ENCODE measurements at regions of chr21 and their contacts with region 1.

Region 1: DNA sequence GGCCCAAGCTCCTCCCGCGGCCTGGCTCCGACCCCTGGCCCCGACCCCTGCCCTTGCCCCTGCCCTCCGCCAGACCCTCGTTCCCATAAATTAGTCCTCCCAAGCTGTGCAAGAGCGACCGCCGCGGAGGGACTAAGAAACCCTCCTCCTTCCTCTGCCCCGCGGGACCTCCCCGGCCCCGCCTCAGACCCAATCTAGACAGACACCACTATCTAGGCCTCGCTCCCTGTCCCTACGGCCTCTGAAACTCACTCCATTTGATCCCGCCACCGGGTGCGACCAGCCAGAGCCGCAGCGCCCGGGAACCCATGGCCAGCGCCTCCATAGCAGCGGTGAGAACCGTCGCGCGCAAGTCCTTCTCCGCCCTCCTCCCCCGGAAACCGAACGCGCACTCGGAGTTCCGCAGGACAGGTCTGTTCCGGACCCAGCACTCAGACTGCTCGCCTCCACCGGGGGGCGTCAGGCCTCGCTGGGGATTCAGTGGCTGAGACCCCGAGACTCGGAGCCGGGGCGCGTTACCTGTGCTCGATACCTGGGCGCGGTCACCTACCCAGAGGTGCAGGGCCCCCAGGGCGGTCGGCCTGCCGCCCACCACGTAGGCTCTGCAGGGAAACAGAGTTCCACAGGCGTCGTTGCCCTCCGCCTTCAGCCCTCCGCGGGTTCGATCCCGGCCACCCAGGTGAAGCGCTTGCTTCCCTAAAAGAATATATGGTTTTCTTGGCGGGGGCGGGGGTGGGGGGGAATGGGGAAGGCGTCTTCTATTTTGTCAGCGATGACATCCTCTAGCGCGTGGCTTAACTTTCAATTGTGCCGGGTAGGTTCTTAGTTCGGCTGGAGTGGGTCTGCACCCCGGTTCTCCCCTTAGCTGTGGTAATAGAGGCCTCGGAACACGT is at the start of gene MRPL39:
- DNase-seq: peak; percentile 73 to 91 (median 86)
- ATAC-seq: peak; percentile 84
- H3K4me3 ChIP-seq: peak within 1 kb of the TSS; percentile 83 to 94
- H3K4me3 Mint-ChIP-seq: peak within 1 kb of the TSS; percentile 100
- H3K27ac ChIP-seq: peak within 1 kb of the TSS; percentile 64 to 69
- H3K27ac Mint-ChIP-seq: peak within 1 kb of the TSS; percentile 98
- H3K4me1 ChIP-seq: peaks cover 22% of the 10 kb centered on the region
- H3K4me1 Mint-ChIP-seq: peaks cover 42% of the 10 kb centered on the region
- H3K27me3 ChIP-seq: no peaks in the 10 kb centered on the region
- H3K27me3 Mint-ChIP-seq: no peaks in the 10 kb centered on the region
- CTCF ChIP-seq: no peak
- total RNA-seq, gene MRPL39: 13.8 to 17.4 TPM

Region 2: DNA sequence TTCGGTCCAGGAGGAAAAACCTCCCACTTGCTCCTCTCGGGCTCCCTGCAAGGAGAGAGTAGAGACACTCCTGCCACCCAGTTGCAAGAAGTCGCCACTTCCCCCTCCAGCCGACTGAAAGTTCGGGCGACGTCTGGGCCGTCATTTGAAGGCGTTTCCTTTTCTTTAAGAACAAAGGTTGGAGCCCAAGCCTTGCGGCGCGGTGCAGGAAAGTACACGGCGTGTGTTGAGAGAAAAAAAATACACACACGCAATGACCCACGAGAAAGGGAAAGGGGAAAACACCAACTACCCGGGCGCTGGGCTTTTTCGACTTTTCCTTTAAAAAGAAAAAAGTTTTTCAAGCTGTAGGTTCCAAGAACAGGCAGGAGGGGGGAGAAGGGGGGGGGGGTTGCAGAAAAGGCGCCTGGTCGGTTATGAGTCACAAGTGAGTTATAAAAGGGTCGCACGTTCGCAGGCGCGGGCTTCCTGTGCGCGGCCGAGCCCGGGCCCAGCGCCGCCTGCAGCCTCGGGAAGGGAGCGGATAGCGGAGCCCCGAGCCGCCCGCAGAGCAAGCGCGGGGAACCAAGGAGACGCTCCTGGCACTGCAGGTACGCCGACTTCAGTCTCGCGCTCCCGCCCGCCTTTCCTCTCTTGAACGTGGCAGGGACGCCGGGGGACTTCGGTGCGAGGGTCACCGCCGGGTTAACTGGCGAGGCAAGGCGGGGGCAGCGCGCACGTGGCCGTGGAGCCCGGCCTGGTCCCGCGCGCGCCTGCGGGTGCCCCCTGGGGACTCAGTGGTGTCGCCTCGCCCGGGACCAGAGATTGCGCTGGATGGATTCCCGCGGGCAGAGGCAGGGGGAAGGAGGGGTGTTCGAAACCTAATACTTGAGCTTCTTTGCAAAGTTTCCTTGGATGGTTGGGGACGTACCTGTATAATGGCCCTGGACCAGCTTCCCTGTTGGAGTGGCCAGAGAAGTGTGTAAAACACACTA is 45.4 kb before region 1 on chr21:
- CTCF ChIA-PET with region 1: interaction called, 6 read pairs
- POLR2A ChIA-PET with region 1: no interaction called
- intact Hi-C with region 1: loop called in 1 of 2 experiments (anchors 1 kb)
- DNase-seq: peak in 8 of 9 experiments; percentile 45 to 84 (median 66)
- ATAC-seq: peak; percentile 77
- H3K4me3 ChIP-seq: peak overlapping the region; percentile 67 to 80
- H3K4me3 Mint-ChIP-seq: peak overlapping the region; percentile 95
- H3K27ac ChIP-seq: peak overlapping the region; percentile 17 to 69
- H3K27ac Mint-ChIP-seq: peak overlapping the region; percentile 93
- H3K4me1 ChIP-seq: peaks cover 22% of the 10 kb centered on the region
- H3K4me1 Mint-ChIP-seq: peaks cover 52% of the 10 kb centered on the region
- H3K27me3 ChIP-seq: no peaks in the 10 kb centered on the region
- H3K27me3 Mint-ChIP-seq: no peaks in the 10 kb centered on the region
- CTCF ChIP-seq: no peak

Region 3: GRCh38 chr21:25639551-25640201 is 32.3 kb after region 1 on chr21:
- CTCF ChIA-PET with region 1: interaction called, 33 read pairs
- POLR2A ChIA-PET with region 1: no interaction called
- intact Hi-C with region 1: loop called (anchors 1 to 2 kb)
- DNase-seq: peak in 8 of 9 experiments; percentile 26 to 74 (median 58)
- ATAC-seq: peak; percentile 84
- H3K4me3 ChIP-seq: peak overlapping the region; percentile 54 to 64
- H3K4me3 Mint-ChIP-seq: peak overlapping the region; percentile 79
- H3K27ac ChIP-seq: no peak overlapping the region
- H3K27ac Mint-ChIP-seq: no peak overlapping the region
- H3K4me1 ChIP-seq: peaks cover 10% of the 10 kb centered on the region
- H3K4me1 Mint-ChIP-seq: peaks cover 14% of the 10 kb centered on the region
- H3K27me3 ChIP-seq: peaks cover 0 to 6% of the 10 kb centered on the region in 2 experiments
- H3K27me3 Mint-ChIP-seq: peaks cover 34% of the 10 kb centered on the region
- CTCF ChIP-seq: no peak

Region 4: GRCh38 chr21:25734904-25735645 is 127.7 kb after region 1 on chr21 and contains the starts of genes ATP5PF and GABPA:
- CTCF ChIA-PET with region 1: interaction called, 6 read pairs
- POLR2A ChIA-PET with region 1: interaction called, 18 read pairs
- intact Hi-C with region 1: loop called (anchors 1 kb)
- DNase-seq: peak; percentile 95 to 100 (median 98)
- ATAC-seq: peak; percentile 84
- H3K4me3 ChIP-seq: peak within 1 kb of the TSS; percentile 91 to 96
- H3K4me3 Mint-ChIP-seq: peak within 1 kb of the TSS; percentile 100
- H3K27ac ChIP-seq: peak within 1 kb of the TSS; percentile 89 to 99
- H3K27ac Mint-ChIP-seq: peak within 1 kb of the TSS; percentile 100
- H3K4me1 ChIP-seq: peaks cover 21% of the 10 kb centered on the region
- H3K4me1 Mint-ChIP-seq: peaks cover 56% of the 10 kb centered on the region
- H3K27me3 ChIP-seq: no peaks in the 10 kb centered on the region
- H3K27me3 Mint-ChIP-seq: no peaks in the 10 kb centered on the region
- CTCF ChIP-seq: no peak
- total RNA-seq, gene ATP5PF: 26.8 to 28.1 TPM
- total RNA-seq, gene GABPA: 21.3 to 25.1 TPM

Region 5: DNA sequence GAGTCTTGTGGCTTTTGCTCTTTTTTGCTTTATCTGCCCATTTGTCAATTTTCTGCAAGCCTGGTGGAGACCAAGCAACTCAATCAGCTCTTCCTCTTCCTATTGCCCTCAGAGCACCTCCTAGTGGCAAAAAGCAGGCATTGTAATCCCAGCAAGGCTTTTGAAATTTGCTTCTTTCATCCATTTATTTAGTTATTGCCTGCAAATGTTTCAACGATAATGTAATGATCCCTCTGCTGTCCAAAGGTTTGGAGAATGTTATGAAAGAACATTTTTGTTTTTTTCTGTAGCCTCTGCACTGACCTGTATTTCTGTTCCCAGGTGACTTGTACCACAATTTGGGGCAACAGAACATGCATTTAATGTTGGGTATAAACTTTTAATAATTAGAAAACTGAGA is 255.2 kb after region 1 on chr21:
- CTCF ChIA-PET with region 1: interaction called, 8 read pairs
- POLR2A ChIA-PET with region 1: no interaction called
- intact Hi-C with region 1: loop called in 1 of 2 experiments (anchors 5 kb)
- DNase-seq: peak in 2 of 9 experiments; percentile 38 to 47
- ATAC-seq: peak; percentile 42
- H3K4me3 ChIP-seq: no peak overlapping the region
- H3K4me3 Mint-ChIP-seq: no peak overlapping the region
- H3K27ac ChIP-seq: no peak overlapping the region
- H3K27ac Mint-ChIP-seq: no peak overlapping the region
- H3K4me1 ChIP-seq: no peaks in the 10 kb centered on the region
- H3K4me1 Mint-ChIP-seq: no peaks in the 10 kb centered on the region
- H3K27me3 ChIP-seq: no peaks in the 10 kb centered on the region
- H3K27me3 Mint-ChIP-seq: no peaks in the 10 kb centered on the region
- CTCF ChIP-seq: peak; percentile 68

Region 6: GRCh38 chr21:26170471-26171257 is 563.3 kb after region 1 on chr21 and contains the start of gene APP:
- CTCF ChIA-PET with region 1: interaction called, 6 read pairs
- POLR2A ChIA-PET with region 1: no interaction called
- intact Hi-C with region 1: loop called (anchors 1 to 2 kb)
- DNase-seq: peak; percentile 75 to 93 (median 84)
- ATAC-seq: peak; percentile 89
- H3K4me3 ChIP-seq: peak within 1 kb of the TSS; percentile 54 to 85
- H3K4me3 Mint-ChIP-seq: peak within 1 kb of the TSS; percentile 96
- H3K27ac ChIP-seq: peak within 1 kb of the TSS in 1 of 2 experiments; percentile 36
- H3K27ac Mint-ChIP-seq: peak within 1 kb of the TSS; percentile 71
- H3K4me1 ChIP-seq: peaks cover 12% of the 10 kb centered on the region
- H3K4me1 Mint-ChIP-seq: peaks cover 14% of the 10 kb centered on the region
- H3K27me3 ChIP-seq: no peaks in the 10 kb centered on the region
- H3K27me3 Mint-ChIP-seq: peaks cover 11% of the 10 kb centered on the region
- CTCF ChIP-seq: peak; percentile 89
- total RNA-seq, gene APP: 14.3 to 18.7 TPM

Region 7: GRCh38 chr21:26674323-26674722 is 1066.9 kb after region 1 on chr21:
- CTCF ChIA-PET with region 1: no interaction called
- POLR2A ChIA-PET with region 1: no interaction called
- intact Hi-C with region 1: no loop called
- DNase-seq: no peak
- ATAC-seq: no peak
- H3K4me3 ChIP-seq: no peak overlapping the region
- H3K4me3 Mint-ChIP-seq: no peak overlapping the region
- H3K27ac ChIP-seq: no peak overlapping the region
- H3K27ac Mint-ChIP-seq: no peak overlapping the region
- H3K4me1 ChIP-seq: no peaks in the 10 kb centered on the region
- H3K4me1 Mint-ChIP-seq: no peaks in the 10 kb centered on the region
- H3K27me3 ChIP-seq: no peaks in the 10 kb centered on the region
- H3K27me3 Mint-ChIP-seq: peaks cover 2% of the 10 kb centered on the region
- CTCF ChIP-seq: no peak

Region 8: GRCh38 chr21:26715878-26716506 is 1108.6 kb after region 1 on chr21:
- CTCF ChIA-PET with region 1: interaction called, 5 read pairs
- POLR2A ChIA-PET with region 1: no interaction called
- intact Hi-C with region 1: loop called (anchors 1 to 5 kb)
- DNase-seq: peak in 3 of 9 experiments; percentile 22 to 36 (median 24)
- ATAC-seq: no peak
- H3K4me3 ChIP-seq: no peak overlapping the region
- H3K4me3 Mint-ChIP-seq: no peak overlapping the region
- H3K27ac ChIP-seq: no peak overlapping the region
- H3K27ac Mint-ChIP-seq: no peak overlapping the region
- H3K4me1 ChIP-seq: no peaks in the 10 kb centered on the region
- H3K4me1 Mint-ChIP-seq: no peaks in the 10 kb centered on the region
- H3K27me3 ChIP-seq: no peaks in the 10 kb centered on the region
- H3K27me3 Mint-ChIP-seq: peaks cover 11% of the 10 kb centered on the region
- CTCF ChIP-seq: peak; percentile 42